ENCODE measurements at regions of chr15 and their contacts with region 1.

Region 1: DNA sequence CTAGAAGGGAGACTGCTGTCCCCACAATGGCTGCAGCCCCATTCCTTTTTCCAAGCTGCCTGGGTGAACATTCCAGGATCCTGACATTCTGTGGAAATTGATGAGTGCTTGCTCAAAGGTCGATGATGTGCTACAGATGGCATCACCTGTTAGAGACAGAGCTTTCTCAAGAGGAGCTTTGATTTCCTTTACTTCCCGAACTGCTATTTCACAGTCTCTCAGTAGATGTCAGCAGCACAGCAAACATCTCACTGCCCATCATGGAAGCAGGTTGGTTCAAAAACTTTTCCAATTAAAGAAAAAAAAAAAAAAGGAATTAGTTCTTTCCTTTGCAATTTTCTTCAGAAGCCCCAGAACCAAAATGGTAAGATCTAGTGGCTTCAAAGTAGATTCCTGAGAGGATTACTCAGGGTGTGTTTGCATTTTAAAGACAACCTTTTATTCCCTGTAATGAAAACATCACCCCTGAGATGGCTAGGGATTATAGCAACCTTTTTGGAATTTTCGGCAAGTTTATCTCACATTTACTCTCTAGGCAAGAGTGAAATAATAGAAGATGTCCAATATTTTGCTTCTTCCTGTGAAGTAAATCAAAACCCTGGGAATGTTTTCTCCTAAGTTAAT is 44.8 kb downstream of the POLR2M start:
- DNase-seq: peak; percentile 37
- H3K4me3 Mint-ChIP-seq: no peak overlapping the region
- H3K27ac Mint-ChIP-seq: no peak overlapping the region
- H3K4me1 Mint-ChIP-seq: no peaks in the 10 kb centered on the region
- H3K27me3 Mint-ChIP-seq: no peaks in the 10 kb centered on the region
- CTCF ChIP-seq: peak; percentile 40

Region 2: GRCh38 chr15:57769266-57769665 is 18.0 kb after region 1 on chr15:
- CTCF ChIA-PET with region 1: no interaction called
- intact Hi-C with region 1: no loop called
- DNase-seq: no peak
- H3K4me3 Mint-ChIP-seq: no peak overlapping the region
- H3K27ac Mint-ChIP-seq: no peak overlapping the region
- H3K4me1 Mint-ChIP-seq: peaks cover 10% of the 10 kb centered on the region
- H3K27me3 Mint-ChIP-seq: peaks cover 25% of the 10 kb centered on the region
- CTCF ChIP-seq: no peak

Region 3: GRCh38 chr15:57849317-57849716 is 98.0 kb after region 1 on chr15:
- CTCF ChIA-PET with region 1: interaction called, 10 read pairs
- intact Hi-C with region 1: no loop called
- DNase-seq: no peak
- H3K4me3 Mint-ChIP-seq: no peak overlapping the region
- H3K27ac Mint-ChIP-seq: no peak overlapping the region
- H3K4me1 Mint-ChIP-seq: no peaks in the 10 kb centered on the region
- H3K27me3 Mint-ChIP-seq: peaks cover 83% of the 10 kb centered on the region
- CTCF ChIP-seq: no peak

Measured in Calu3 (cell line).